ENCODE measurements at regions of chr19 and their contacts with region 1.

Region 1: DNA sequence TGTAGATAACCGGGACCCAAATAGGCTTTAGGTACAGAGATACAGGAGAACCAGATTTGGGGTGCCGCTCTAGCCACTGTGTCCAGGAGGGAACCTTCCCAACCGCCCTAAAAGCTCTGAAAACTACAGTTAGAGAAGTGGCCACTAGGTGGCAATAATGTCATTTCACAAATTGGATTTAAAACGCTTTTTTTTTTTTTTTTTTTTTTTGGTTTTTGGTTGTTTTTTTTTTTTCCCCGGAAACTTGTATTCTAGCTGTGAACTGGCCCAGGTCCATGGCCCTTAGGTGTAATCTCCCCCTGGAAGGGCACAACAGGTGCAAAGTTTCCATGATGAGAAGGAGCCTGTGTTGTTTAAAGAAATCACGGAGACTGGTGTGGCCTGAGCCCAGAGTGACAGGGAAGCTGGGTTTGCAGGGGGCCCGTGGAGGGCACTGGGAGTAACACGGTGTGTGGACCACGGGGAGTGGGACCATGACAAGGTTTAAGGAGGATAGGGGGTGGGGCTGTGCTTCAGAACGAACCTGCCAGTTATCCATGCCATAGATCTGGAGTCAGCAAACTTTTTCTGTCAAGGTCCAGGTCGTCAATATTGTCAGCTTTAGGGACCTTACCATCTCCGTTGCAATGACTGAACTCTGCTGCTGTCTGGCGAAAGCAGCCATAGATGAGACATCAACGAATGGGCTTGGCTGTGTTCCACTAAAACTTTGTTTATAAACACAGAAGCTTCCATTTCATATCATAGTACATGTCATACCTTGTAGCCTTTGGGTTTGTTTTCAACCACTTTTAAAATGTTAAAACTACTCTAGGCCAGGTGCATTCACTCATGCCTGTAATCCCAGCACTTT is 10.1 kb downstream of the OR1I1 start:
- DNase-seq: peak in 1 of 2 donors; percentile 55
- H3K4me3 ChIP-seq: no peak overlapping the region
- CTCF ChIP-seq: no peak
- POLR2A ChIP-seq: no peak

Region 2: GRCh38 chr19:13952154-13953035 is 1139.7 kb before region 1 on chr19 and contains the start of gene DCAF15:
- intact Hi-C with region 1: loop called (anchors 10 kb)
- DNase-seq: peak; percentile 99 to 100
- H3K4me3 ChIP-seq: peak within 1 kb of the TSS; percentile 61
- CTCF ChIP-seq: no peak
- POLR2A ChIP-seq: no peak
- total RNA-seq, gene DCAF15: 31.8 to 51.7 (median 43.0) TPM

Region 3: DNA sequence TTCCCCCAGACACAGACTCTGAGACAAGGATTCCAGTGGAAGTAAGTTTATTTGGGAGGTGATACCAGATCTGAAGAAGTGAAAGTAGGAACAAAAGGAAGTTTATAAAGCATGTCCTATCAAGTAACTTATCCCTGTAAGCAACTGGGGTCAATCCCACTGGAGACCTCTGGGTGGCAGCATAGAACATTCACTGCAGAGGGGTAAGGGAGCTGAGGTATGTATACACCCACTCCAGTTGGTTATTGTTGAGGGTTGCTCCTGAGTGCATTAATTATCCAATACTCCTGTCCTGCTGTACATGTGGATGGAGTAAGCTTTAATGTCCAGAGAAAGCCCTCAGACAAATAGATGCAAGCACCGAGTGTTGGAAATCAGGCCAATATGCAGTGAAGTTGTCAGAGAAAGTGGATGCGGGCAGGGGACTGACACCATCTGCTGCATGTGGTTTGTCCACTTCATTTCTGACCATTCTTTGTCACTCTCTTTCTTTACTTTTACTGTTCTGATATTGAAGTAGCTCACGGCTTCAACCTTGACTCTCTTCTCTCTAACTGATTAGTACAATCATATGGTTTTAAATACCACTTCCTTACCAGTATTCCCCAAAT is 62.0 kb after region 1 on chr19:
- intact Hi-C with region 1: loop called (anchors 5 kb)
- DNase-seq: no peak
- H3K4me3 ChIP-seq: no peak overlapping the region
- CTCF ChIP-seq: no peak
- POLR2A ChIP-seq: no peak

Region 4: GRCh38 chr19:15251749-15252397 is 159.7 kb after region 1 on chr19:
- intact Hi-C with region 1: loop called (anchors 10 kb)
- DNase-seq: peak; percentile 62 to 94
- H3K4me3 ChIP-seq: no peak overlapping the region
- CTCF ChIP-seq: no peak
- POLR2A ChIP-seq: no peak